Thyroid gland (tissue), 4 donors: ENCODE measurements at regions of chr11 and their contacts with region 1.

Region 1: DNA sequence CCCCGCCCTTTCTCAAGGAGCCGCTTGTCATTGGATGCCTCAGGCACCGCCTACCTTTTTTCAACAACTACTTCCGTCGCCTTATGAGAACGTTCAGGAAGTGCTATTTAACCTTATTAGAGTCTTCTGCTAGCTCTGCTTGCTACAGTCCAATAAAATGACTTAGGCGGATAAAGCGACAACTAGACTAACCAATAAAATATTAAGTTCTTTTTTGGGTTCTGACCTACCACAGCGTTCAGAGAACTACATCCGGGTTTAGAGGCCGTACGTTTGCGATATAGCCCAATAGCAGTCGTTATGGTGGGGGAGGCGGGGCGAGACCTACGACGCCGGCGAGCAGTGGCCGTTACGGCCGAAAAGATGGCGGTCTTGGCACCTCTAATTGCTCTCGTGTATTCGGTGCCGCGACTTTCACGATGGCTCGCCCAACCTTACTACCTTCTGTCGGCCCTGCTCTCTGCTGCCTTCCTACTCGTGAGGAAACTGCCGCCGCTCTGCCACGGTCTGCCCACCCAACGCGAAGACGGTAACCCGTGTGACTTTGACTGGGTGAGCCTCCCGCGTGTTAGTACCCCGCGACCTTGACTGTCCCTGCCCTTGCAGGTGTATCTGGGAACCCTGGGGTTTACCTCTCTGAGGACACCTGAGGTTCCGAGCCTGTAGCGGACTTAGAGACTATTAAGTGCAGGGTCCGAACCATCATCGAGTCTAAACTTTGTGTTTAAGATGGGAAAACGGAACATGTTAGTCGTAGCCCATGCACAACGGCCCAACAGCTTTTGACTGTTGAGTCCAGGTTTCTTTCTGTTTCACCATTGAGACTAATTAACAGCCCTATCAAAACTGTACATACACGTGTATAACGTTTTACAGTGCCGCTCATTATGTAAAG is at the start of gene TMX2:
- DNase-seq: peak; percentile 94 to 96
- H3K4me3 ChIP-seq: peak within 1 kb of the TSS; percentile 49 to 78 (median 55)
- H3K27ac ChIP-seq: peak within 1 kb of the TSS; percentile 40 to 93 (median 71)
- H3K4me1 ChIP-seq: peaks cover 21 to 22% of the 10 kb centered on the region in 2 donors
- H3K27me3 ChIP-seq: no peaks in the 10 kb centered on the region
- CTCF ChIP-seq: no peak
- POLR2A ChIP-seq: no peak
- total RNA-seq, gene TMX2: 85.3 to 127 (median 92.4) TPM

Region 2: DNA sequence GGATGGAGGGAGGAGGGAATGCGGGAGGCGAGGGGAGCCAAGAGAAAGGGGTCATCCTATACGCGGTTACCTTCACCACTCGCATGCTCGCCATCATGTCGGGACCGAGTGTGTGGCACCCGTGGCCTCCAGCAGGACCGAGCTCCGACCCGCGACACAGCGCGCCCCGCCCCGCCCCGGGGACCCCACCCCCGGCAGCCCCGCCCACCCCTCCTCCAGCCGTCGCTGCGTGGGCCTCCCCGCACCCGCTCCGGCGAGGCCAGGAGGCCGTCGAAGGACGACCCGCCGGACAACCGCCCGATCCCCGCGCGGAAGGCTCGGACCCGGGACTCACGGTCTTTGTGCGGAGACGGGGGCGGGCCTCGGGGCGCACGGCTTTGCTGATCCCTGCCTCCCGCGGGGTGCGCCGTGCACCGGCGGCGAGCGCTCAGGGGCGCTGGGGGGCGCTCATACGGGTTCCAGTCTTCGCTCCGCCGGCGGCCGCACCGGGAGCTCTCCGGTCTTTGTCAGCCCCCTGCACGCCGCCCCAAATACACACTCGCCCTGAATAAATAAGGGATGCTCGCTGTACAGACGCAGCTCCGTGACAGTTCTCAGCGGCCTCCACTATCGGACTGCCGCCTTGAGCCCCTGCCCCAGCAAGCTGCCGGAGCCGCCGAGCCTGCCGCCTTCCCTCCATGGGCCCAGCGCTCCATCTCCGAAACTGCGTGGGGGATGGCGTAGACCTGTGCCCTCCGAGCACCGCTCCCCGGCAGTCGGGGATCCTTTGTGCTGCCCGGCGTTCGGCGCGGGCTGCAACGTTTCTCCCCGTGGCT is 144.8 kb before region 1 on chr11 and contains the start of gene UBE2L6:
- intact Hi-C with region 1: no loop called
- DNase-seq: peak; percentile 80 to 84
- H3K4me3 ChIP-seq: peak within 1 kb of the TSS; percentile 73 to 86 (median 78)
- H3K27ac ChIP-seq: peak within 1 kb of the TSS; percentile 10 to 84 (median 83)
- H3K4me1 ChIP-seq: peaks cover 7 to 18% of the 10 kb centered on the region in 2 donors
- H3K27me3 ChIP-seq: no peaks in the 10 kb centered on the region
- CTCF ChIP-seq: peak in 1 of 6 experiments; percentile 92
- POLR2A ChIP-seq: peak in 1 of 2 donors; percentile 31
- total RNA-seq, gene UBE2L6: 30.8 to 41.7 (median 38.8) TPM

Region 3: DNA sequence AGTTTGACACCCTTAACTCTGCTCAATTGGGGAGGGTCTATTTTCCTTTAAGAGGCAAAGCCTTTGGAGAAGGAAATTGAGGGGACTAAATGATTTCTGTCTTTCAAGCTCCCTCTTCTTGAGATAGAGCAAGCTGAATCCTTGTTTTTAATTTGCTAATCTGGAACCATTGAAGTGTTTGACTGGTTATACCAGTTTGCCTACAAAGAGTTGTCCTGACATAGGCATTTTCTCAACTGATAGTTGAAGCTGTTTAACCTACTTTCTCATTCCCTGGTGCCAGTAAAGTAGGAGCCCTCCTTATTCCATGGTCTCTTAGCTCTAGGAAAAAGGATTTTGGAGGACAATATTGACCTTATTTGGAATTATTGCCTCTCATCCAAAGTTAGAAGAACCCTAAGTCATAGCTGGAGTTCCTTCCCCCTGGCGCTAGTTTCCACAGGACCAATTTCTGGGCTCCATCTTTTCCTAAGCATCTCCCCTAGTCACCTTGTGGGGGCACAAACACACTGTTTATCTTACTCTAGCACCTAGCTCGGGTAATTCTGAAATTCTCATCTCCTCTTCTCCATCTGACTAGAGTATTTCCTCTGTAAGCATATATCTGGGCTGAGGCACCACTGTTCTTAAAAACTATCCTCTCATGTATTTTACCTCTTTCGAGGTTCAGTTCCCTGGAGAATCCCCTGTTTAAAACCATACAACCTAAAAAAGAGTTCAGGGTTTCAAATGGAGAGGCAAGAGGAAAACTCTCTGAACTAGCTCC is 37.1 kb before region 1 on chr11:
- intact Hi-C with region 1: loop called (anchors 5 kb)
- DNase-seq: no peak
- H3K4me3 ChIP-seq: no peak overlapping the region
- H3K27ac ChIP-seq: peak overlapping the region; percentile 80 to 85 (median 82)
- H3K4me1 ChIP-seq: peaks cover 32 to 43% of the 10 kb centered on the region in 2 donors
- H3K27me3 ChIP-seq: no peaks in the 10 kb centered on the region
- CTCF ChIP-seq: no peak
- POLR2A ChIP-seq: no peak

Region 4: DNA sequence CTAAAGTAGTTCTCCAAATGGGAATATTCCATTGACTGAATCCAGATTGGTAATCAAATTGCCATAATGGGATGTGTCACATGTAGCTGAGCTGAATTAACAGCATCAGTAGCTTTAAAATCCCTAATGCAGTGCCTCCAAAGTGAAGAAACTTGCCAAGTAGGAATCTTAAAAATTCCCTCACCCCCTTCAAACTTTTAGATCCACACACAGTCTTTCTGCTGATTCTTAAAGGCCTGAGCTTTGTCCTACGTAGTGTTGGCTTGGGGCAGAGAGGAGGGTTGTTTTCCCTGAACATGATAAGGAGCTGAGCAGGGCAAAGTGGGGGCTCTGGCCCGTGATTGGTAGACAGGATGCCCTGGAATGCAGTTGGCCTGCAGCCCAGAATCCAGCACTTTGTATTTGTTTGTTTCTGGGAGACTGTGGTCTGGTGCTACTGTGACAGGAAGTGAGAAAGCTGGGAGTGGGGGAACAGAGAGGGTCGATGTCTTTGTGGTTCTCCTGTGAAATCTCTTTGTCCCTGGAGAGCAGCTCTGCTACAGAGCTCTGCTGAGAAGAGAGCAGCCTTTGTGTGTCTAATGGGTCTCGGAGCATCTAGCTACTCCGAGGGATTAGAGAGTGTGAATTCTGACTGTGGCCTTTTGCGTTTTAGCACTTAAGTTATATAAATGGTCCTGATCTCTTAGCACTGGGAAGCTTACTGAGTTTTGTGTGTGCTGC is 66.0 kb after region 1 on chr11:
- intact Hi-C with region 1: no loop called
- DNase-seq: peak; percentile 99
- H3K4me3 ChIP-seq: peak overlapping the region in 1 of 3 donors; percentile 3
- H3K27ac ChIP-seq: peak overlapping the region; percentile 97 to 99 (median 99)
- H3K4me1 ChIP-seq: peaks cover 96 to 99% of the 10 kb centered on the region in 2 donors
- H3K27me3 ChIP-seq: no peaks in the 10 kb centered on the region
- CTCF ChIP-seq: no peak
- POLR2A ChIP-seq: peak; percentile 32 to 90